Tibial artery (tissue), 4 donors: ENCODE measurements at regions of chr11 and their contacts with region 1.

Region 1: DNA sequence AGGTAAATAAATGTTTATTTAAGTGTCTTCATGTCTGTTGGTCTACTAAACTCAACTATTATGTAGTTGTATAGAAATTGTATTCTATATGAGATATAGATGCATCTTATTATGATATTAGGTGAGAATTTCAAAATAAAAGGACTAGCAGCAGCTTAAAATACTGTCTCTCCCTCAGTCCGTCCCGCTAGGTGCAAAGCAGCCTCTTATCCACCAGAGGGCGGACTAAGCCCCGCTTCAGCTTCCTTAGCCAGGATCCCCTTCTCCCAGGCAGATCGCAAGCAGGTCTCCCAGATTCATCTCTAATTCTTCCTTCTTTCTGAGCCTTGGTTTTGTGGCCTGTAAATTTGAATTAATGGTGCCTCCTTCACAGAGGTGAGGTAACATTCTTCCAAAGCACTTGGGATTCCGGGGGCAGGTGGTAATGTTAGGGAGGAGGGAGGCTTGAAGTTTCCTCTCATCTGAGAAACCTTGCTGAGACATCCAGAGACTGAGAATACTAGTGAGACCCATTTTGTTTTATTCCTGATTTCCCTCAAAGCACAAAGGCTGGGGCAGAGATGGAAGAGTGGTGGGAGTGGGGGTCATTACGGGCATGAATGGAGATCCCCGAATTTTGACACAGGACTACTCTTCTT is 13.5 kb upstream of the INSC start:
- DNase-seq: peak in 1 of 2 donors; percentile 71
- H3K4me3 ChIP-seq: no peak overlapping the region
- H3K27ac ChIP-seq: no peak overlapping the region
- H3K4me1 ChIP-seq: no peaks in the 10 kb centered on the region
- H3K27me3 ChIP-seq: no peaks in the 10 kb centered on the region
- CTCF ChIP-seq: peak; percentile 87 to 94

Region 2: GRCh38 chr11:15159085-15159484 is 57.9 kb after region 1 on chr11:
- intact Hi-C with region 1: no loop called
- DNase-seq: no peak
- H3K4me3 ChIP-seq: no peak overlapping the region
- H3K27ac ChIP-seq: no peak overlapping the region
- H3K4me1 ChIP-seq: no peaks in the 10 kb centered on the region
- H3K27me3 ChIP-seq: no peaks in the 10 kb centered on the region
- CTCF ChIP-seq: no peak

Region 3: DNA sequence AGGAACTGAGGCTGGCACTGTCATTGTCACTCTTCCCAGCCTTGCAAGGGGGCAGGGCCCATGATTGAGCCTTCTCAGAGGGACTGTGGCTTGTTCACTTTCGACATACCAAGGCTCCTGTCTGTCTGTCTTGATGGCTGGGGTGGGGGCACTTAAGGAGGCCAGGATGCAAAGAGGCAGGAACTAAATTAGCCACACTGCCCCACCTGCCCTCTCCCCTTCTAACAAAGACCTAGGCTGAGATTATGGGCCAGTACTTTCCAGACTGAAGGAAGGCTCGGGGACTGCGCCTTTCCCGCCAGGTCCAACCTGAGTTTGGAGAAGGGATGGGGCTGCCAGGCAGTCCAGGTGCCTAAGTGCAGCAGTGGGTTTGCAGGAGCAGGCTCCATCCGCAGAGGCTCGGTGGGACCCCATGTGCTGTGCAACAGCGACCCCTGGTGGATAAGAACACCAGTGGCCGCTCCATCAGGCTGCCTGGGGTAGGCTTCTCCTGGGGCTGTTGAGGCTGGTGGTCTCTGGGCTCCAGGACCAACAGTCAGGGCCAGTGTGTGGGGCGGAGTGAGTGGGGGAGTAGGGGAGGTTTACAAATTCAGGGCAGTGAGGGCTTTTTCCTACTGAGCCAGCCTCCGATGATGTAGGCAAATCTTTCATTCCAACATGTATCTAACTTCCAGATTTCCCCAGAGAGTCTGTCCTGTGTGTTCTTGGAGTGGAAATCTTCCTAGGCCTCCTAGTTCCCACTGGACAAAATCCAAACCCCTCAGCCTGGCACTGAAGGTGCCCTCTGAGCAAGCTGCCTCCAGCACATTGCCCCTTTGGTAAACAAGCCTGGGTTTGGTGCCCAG is 107.4 kb after region 1 on chr11:
- intact Hi-C with region 1: loop called (anchors 2 kb)
- DNase-seq: peak; percentile 46 to 74
- H3K4me3 ChIP-seq: no peak overlapping the region
- H3K27ac ChIP-seq: no peak overlapping the region
- H3K4me1 ChIP-seq: no peaks in the 10 kb centered on the region
- H3K27me3 ChIP-seq: no peaks in the 10 kb centered on the region
- CTCF ChIP-seq: peak; percentile 91 to 93